Ovary (tissue), 10 donors: ENCODE measurements at regions of chr16 and their contacts with region 1.

Region 1: DNA sequence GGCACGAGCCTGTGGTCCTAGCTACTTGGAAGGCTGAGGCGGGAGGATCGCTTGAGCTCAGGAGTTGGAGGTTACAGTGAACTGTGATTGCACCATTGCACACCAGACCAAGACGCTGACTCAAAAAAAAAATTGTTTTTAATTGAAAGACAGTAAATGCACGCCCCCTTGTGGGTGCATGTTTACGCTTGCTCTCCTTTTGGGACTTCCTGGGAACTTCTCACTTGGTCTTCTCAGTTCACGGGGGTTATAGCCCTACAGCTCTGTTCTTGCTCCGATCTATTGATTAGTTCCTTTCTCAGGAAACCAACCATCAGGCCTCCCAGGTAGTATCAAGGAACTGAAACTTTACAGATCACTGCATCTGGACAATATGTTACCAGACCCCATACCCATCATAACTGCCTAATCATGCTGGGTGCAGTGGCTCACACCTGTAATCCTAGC is 14.2 kb upstream of the RIPOR1 start:
- DNase-seq: peak; percentile 71 to 86 (median 80)
- H3K4me3 ChIP-seq: no peak overlapping the region
- H3K27ac ChIP-seq: no peak overlapping the region
- H3K4me1 ChIP-seq: no peaks in the 10 kb centered on the region
- H3K27me3 ChIP-seq: no peaks in the 10 kb centered on the region
- CTCF ChIP-seq: peak; percentile 20 to 70 (median 55)
- EP300 ChIP-seq: no peak
- POLR2A ChIP-seq: no peak

Region 2: DNA sequence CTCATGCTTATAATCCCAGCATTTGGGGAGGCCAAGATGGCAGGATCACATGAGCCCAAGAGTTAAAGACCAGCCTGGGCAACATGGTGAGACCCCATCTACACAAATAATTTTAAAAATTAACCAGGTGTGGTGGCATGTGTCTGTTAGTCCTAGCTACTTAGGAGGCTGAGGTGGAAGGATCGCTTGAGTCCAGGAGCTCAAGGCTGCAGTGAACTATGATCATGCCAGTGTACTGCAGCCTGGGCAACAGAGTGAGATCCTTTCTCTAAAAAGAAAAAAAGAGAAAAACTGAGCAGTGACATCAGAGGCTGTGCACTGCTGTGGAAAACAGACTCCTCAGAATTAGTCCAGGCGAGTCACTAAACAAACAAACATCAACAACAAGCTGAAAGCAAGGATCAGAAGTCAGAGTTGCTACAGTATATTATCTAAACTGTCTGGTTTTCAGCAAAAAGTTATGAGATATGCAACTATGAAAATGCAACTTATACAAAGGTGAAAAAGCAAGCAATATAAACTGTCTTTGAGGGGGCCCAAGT is 446.1 kb before region 1 on chr16:
- intact Hi-C with region 1: no loop called
- DNase-seq: no peak
- H3K4me3 ChIP-seq: no peak overlapping the region
- H3K27ac ChIP-seq: no peak overlapping the region
- H3K4me1 ChIP-seq: no peaks in the 10 kb centered on the region
- H3K27me3 ChIP-seq: no peaks in the 10 kb centered on the region
- CTCF ChIP-seq: no peak
- EP300 ChIP-seq: no peak
- POLR2A ChIP-seq: no peak

Region 3: GRCh38 chr16:67480833-67481560 is 33.4 kb before region 1 on chr16 and contains the start of gene ATP6V0D1:
- intact Hi-C with region 1: loop called in 1 of 4 experiments (anchors 5 kb)
- DNase-seq: peak; percentile 98 to 100 (median 99)
- H3K4me3 ChIP-seq: peak within 1 kb of the TSS; percentile 93
- H3K27ac ChIP-seq: peak within 1 kb of the TSS; percentile 68 to 69
- H3K4me1 ChIP-seq: peaks cover 15% of the 10 kb centered on the region
- H3K27me3 ChIP-seq: no peaks in the 10 kb centered on the region
- CTCF ChIP-seq: peak; percentile 90 to 99 (median 96)
- EP300 ChIP-seq: no peak
- POLR2A ChIP-seq: peak; percentile 64
- total RNA-seq, gene ATP6V0D1: 35.8 to 113 (median 63.0) TPM

Region 4: DNA sequence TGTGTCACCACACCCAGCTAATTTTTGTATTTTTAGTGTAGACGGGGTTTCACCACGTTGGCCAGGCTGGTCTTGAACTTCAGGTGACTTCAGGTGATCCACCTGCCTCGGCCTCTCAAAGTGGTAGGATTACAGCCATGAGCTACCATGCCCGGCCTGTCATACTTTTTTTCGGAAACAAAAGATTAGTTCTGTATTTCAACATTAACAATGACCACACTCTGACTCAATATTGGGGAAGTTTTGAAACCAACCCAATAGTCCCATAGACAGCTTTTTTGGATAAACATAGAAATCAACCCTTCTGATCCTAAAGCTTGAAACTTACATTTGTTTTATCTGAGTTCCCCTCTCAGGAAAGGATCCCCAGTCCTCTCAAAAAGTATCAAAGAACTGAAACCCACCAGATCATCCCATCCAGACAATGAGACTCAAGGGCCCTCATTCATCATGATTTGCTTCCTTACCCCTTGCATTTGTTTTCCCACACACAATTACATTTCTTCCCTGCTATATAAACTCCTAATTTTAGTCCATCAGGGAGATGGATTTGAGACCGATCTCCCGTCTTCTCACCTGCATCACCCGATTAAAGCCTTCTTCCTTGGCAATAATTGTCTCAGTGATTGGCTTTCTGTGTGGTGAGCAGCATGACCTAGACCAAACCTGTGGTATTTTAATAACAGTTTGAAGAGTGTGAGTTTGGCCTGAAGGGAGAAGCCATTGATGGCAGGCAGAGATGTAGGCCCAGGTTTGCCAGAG is 23.9 kb before region 1 on chr16:
- intact Hi-C with region 1: loop called in 1 of 4 experiments (anchors 2 kb)
- DNase-seq: no peak
- H3K4me3 ChIP-seq: no peak overlapping the region
- H3K27ac ChIP-seq: peak overlapping the region in 1 of 2 donors; percentile 72
- H3K4me1 ChIP-seq: peaks cover 9% of the 10 kb centered on the region
- H3K27me3 ChIP-seq: no peaks in the 10 kb centered on the region
- CTCF ChIP-seq: no peak
- EP300 ChIP-seq: no peak
- POLR2A ChIP-seq: no peak

Region 5: DNA sequence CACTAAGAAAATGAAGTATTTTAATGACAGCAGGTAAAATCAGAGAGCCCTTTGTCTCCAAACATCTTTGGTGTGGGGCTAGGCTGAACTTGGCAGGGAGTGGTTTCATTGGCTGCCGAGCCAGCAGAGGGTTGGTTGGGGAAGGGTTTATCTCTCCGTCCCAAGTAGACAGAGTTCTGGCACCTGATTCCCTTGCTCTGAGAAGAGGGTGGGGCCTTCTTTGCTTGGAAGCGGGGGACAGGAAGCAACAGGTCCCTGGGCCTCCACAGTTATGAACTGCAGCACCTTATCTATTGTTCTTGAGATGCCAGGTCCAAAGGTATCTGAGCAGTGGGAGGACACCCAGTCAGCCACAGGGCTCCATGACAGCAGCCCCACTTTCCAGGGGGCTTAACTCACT is 1210.4 kb after region 1 on chr16:
- intact Hi-C with region 1: loop called in 1 of 4 experiments (anchors 5 kb)
- DNase-seq: no peak
- H3K4me3 ChIP-seq: no peak overlapping the region
- H3K27ac ChIP-seq: no peak overlapping the region
- H3K4me1 ChIP-seq: no peaks in the 10 kb centered on the region
- H3K27me3 ChIP-seq: no peaks in the 10 kb centered on the region
- CTCF ChIP-seq: no peak
- EP300 ChIP-seq: no peak
- POLR2A ChIP-seq: no peak